Endothelial cell of umbilical vein (primary cell): ENCODE measurements at regions of chr1 and their contacts with region 1.

Region 1: DNA sequence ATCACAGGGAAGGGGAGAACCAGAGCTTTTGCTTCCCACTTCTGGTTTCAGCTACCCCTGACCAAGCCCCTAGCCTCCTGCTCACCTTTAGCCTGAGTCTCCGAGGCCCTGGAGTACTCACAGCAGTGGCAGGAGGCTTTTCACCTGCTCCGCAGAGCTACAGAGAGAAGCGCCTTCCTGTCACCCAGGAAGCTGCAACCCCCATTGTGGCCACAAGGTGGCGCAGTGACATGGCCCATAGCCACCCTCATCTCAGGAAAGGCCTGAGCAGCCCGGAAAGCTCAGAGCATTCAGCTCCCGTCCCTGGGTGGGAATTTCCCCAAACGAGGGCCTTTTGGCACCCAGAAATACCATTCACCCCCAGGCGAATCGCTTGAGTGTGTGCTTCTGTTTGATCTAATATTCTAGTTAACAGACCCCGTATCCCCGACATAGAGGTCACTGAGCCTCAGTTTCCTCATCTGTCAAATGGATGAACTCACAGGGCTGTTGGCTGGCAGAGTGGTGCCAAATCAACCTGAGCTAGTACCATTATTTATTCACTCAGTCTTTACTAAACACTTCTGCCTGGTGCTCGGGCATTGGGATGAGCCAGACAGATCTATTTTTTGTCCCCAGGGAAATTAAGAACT is 25.3 kb downstream of the A3GALT2 start:
- DNase-seq: peak; percentile 39
- H3K4me3 ChIP-seq: no peak overlapping the region
- H3K27ac ChIP-seq: no peak overlapping the region
- H3K4me1 ChIP-seq: no peaks in the 10 kb centered on the region
- H3K27me3 ChIP-seq: no peaks in the 10 kb centered on the region
- CTCF ChIP-seq: peak; percentile 84 to 86
- POLR2A ChIP-seq: no peak

Region 2: GRCh38 chr1:32900951-32901822 is 394.4 kb before region 1 on chr1 and contains the start of gene TMEM54:
- CTCF ChIA-PET with region 1: no interaction called
- POLR2A ChIA-PET with region 1: no interaction called
- dilution Hi-C with region 1: no loop called
- intact Hi-C with region 1: no loop called
- DNase-seq: no peak
- H3K4me3 ChIP-seq: peak within 1 kb of the TSS; percentile 43 to 62 (median 50)
- H3K27ac ChIP-seq: no peak within 1 kb of the TSS
- H3K4me1 ChIP-seq: peaks cover 13% of the 10 kb centered on the region
- H3K27me3 ChIP-seq: peaks cover 0 to 3% of the 10 kb centered on the region in 2 experiments
- CTCF ChIP-seq: peak in 1 of 2 donors; percentile 6
- POLR2A ChIP-seq: peak; percentile 32
- total RNA-seq, gene TMEM54: 14.8 and 23.6 TPM in 2 replicates

Region 3: GRCh38 chr1:33256701-33257399 is 38.7 kb before region 1 on chr1:
- CTCF ChIA-PET with region 1: interaction called, 4 read pairs
- POLR2A ChIA-PET with region 1: no interaction called
- dilution Hi-C with region 1: no loop called
- intact Hi-C with region 1: loop called (anchors 5 kb)
- DNase-seq: peak; percentile 65
- H3K4me3 ChIP-seq: peak overlapping the region; percentile 79 to 88 (median 81)
- H3K27ac ChIP-seq: peak overlapping the region; percentile 76
- H3K4me1 ChIP-seq: peaks cover 12% of the 10 kb centered on the region
- H3K27me3 ChIP-seq: no peaks in the 10 kb centered on the region
- CTCF ChIP-seq: no peak
- POLR2A ChIP-seq: peak; percentile 17

Region 4: GRCh38 chr1:33312413-33312749 is 16.8 kb after region 1 on chr1:
- CTCF ChIA-PET with region 1: interaction called, 14 read pairs
- POLR2A ChIA-PET with region 1: no interaction called
- dilution Hi-C with region 1: no loop called
- intact Hi-C with region 1: no loop called
- DNase-seq: no peak
- H3K4me3 ChIP-seq: no peak overlapping the region
- H3K27ac ChIP-seq: no peak overlapping the region
- H3K4me1 ChIP-seq: no peaks in the 10 kb centered on the region
- H3K27me3 ChIP-seq: no peaks in the 10 kb centered on the region
- CTCF ChIP-seq: no peak
- POLR2A ChIP-seq: no peak

Region 5: DNA sequence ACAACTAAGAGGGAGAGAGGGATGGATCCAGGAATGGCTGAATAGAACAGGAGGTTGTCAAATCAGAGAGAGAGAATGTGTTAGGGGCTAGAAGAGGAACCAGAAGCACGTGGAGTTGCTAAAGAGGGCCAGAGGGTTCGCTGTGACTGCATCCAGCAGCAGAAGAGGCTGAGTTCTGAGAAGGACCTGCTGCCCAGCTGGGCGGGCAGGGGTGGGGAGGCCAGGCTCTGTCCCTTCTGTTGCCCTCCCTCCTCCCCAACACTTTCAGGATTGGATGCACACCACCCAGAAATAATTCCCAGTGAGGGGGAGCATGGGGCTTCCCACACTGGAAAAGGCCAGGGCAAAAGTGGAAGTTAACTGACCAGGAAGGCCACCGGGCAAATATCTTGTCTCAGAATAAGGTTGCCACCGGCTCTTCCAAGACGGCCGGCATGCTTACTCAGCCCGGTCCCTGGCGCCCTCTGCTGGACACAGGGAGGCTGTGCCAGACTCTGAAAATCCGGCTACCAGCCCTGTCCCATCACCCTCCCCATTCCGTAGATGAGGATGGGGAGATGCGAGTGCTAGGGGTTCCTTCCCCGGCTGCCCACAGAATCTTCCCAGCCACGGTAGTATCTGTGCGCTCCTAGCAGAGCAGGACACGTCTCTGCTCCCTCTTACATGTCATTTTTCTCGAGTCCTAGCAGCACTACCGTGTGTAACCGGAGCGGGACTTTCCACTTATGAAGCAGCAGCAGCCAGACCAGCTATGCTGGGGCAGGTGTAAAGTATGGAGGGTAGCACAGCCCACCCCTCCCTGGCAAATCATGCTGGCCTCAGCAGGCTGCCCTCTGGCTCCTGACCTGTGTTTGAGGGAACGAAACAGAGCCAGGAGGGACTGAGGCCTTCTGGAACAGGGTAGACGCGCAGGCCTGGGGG is 72.2 kb after region 1 on chr1:
- CTCF ChIA-PET with region 1: interaction called, 95 read pairs
- POLR2A ChIA-PET with region 1: no interaction called
- dilution Hi-C with region 1: no loop called
- intact Hi-C with region 1: loop called (anchors 1 kb)
- DNase-seq: peak; percentile 67
- H3K4me3 ChIP-seq: no peak overlapping the region
- H3K27ac ChIP-seq: no peak overlapping the region
- H3K4me1 ChIP-seq: no peaks in the 10 kb centered on the region
- H3K27me3 ChIP-seq: no peaks in the 10 kb centered on the region
- CTCF ChIP-seq: peak; percentile 90 to 98
- POLR2A ChIP-seq: no peak

Region 6: DNA sequence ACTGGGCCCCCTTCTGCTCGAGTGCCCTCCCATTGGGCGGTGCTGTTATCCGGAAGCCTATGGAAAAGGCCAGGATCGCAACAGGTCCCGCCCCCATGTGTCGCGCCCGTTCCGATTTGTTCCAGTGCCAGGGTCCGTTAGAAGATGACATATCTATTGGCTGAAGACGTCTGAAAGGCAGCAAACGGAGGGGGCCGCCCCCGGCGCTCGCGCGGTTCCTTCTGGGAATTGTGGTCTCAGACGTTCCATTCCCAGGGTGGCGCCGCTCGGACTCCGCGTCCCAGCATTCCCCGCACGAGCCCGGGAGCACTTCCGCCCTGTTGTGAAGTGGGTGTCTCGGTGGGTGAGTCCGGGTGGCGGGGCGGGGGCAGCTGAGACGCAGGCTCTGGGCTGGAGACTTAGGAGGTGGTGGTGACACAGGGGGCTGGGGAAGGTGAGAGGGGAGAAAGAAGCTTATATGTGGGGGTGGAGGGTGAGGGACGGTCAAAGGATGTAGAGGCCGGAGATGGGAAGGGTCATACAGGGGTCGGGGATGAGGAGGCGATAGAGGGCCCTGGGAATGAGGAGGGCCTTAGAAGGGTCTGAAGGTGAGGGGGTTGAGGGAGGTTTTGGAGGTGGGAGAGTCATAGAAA is 176.9 kb after region 1 on chr1 and contains the start of gene ZSCAN20:
- CTCF ChIA-PET with region 1: interaction called, 97 read pairs
- POLR2A ChIA-PET with region 1: no interaction called
- dilution Hi-C with region 1: no loop called
- intact Hi-C with region 1: loop called (anchors 1 kb)
- DNase-seq: peak; percentile 99
- H3K4me3 ChIP-seq: peak within 1 kb of the TSS; percentile 70 to 73 (median 72)
- H3K27ac ChIP-seq: peak within 1 kb of the TSS; percentile 63
- H3K4me1 ChIP-seq: peaks cover 13% of the 10 kb centered on the region
- H3K27me3 ChIP-seq: no peaks in the 10 kb centered on the region
- CTCF ChIP-seq: no peak
- POLR2A ChIP-seq: peak; percentile 71
- total RNA-seq, gene ZSCAN20: 4.7 and 5.8 TPM in 2 replicates